ENCODE measurements at regions of chr16 and their contacts with region 1.

Region 1: GRCh38 chr16:26087091-26087490 is 395.3 kb downstream of the HS3ST4 start:
- DNase-seq: no peak
- H3K4me3 ChIP-seq: no peak overlapping the region
- H3K27ac ChIP-seq: no peak overlapping the region
- H3K4me1 ChIP-seq: no peaks in the 10 kb centered on the region
- H3K27me3 ChIP-seq: no peaks in the 10 kb centered on the region
- CTCF ChIP-seq: no peak
- POLR2A ChIP-seq: no peak

Region 2: GRCh38 chr16:24975428-24975889 is 1111.6 kb before region 1 on chr16:
- intact Hi-C with region 1: no loop called
- DNase-seq: no peak
- H3K4me3 ChIP-seq: no peak overlapping the region
- H3K27ac ChIP-seq: no peak overlapping the region
- H3K4me1 ChIP-seq: no peaks in the 10 kb centered on the region
- H3K27me3 ChIP-seq: no peaks in the 10 kb centered on the region
- CTCF ChIP-seq: no peak
- POLR2A ChIP-seq: no peak

Region 3: DNA sequence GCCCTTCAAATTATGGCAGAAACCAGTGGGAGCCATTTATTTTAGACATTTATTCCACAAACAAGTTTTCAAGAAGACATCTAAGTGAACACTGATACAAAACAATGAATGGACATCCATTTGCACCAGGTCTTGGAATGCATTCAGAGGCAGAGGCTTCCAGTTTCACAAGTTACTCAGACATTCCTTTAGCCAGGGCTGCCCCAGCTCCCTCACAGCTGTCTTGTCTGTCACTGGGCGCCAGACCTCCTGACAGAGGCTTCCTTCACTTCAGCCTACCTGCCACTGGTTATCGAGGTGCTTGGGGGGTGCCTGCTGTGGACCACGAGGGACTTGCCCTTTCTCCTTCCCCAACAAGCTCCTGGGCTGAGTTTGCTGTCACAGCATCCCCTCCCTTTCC is 851.1 kb before region 1 on chr16:
- intact Hi-C with region 1: no loop called
- DNase-seq: no peak
- H3K4me3 ChIP-seq: no peak overlapping the region
- H3K27ac ChIP-seq: no peak overlapping the region
- H3K4me1 ChIP-seq: no peaks in the 10 kb centered on the region
- H3K27me3 ChIP-seq: no peaks in the 10 kb centered on the region
- CTCF ChIP-seq: no peak
- POLR2A ChIP-seq: no peak

Region 4: DNA sequence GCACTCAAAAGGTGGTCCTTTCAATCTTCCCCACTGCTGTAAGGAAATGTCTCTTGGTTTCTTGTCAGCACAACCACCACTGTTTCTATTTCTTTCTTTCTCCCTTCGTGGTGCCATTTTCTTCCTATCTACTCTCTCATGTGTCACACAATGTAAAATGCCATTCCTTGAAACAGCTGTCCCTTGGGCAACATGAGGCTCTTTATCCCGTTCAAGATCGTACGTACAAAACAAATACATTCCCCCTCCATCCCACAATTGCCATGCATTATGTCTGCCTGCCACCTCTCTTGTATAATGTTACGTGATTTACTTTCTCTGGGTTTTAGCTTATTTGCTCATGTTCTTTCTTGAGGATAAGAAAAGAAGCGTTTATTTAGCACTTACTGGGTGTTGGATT is 15.3 kb after region 1 on chr16:
- intact Hi-C with region 1: loop called (anchors 1 kb)
- DNase-seq: no peak
- H3K4me3 ChIP-seq: no peak overlapping the region
- H3K27ac ChIP-seq: no peak overlapping the region
- H3K4me1 ChIP-seq: no peaks in the 10 kb centered on the region
- H3K27me3 ChIP-seq: no peaks in the 10 kb centered on the region
- CTCF ChIP-seq: no peak
- POLR2A ChIP-seq: no peak